A673 (cell line): ENCODE measurements at regions of chr1 and their contacts with region 1.

Region 1: GRCh38 chr1:234302354-234302962 is 70.8 kb upstream of the COA6 start:
- DNase-seq: peak; percentile 29
- H3K4me3 ChIP-seq: no peak overlapping the region
- H3K27ac ChIP-seq: peak overlapping the region; percentile 96
- H3K4me1 ChIP-seq: peaks cover 18% of the 10 kb centered on the region
- H3K27me3 ChIP-seq: no peaks in the 10 kb centered on the region
- CTCF ChIP-seq: no peak

Region 2: GRCh38 chr1:232435729-232436128 is 1866.7 kb before region 1 on chr1:
- CTCF ChIA-PET with region 1: no interaction called
- POLR2A ChIA-PET with region 1: interaction called, 10 read pairs
- intact Hi-C with region 1: no loop called
- DNase-seq: peak; percentile 62
- H3K4me3 ChIP-seq: no peak overlapping the region
- H3K27ac ChIP-seq: no peak overlapping the region
- H3K4me1 ChIP-seq: peaks cover 38% of the 10 kb centered on the region
- H3K27me3 ChIP-seq: no peaks in the 10 kb centered on the region
- CTCF ChIP-seq: no peak

Region 3: DNA sequence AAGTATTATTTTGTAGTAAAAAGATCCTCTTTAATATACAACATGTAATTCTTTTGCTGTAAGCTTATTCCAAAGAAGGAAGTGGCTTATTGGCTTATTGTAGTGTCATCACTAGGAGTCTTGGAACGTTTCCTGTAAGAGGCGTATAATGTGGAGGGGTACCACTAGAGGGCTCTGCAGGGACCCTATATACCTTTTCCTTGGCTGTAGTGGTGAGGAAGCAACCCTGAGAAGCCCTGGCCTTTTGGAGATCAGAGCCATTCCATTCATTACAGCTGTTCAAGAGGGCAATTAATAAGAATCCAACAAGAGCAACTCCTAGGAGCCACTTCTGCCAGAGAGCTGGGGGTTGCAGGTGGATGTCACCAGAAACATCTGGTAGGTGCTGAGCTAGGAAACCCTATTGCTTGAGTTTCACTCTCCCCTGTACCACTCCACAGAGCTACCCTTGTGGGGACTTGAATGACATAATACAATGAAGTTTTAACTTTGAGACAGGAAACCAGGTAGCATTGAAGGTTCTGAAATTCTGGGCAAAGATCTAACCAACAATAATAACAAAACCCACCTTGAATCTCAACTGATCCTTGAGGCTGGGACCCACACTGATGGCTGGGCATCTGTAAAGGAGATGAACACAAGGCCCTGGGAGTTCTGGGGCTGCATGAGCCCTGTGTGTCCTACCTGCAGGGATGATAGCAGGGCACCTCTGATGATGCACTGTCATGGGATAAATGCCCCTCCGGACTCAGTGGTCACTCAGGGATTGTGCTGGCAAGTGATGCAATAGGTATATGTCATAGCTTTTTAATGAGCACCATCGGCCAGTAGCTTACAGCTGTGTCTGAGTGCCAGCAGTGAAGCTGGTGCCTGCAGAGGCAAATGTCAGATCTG is 89.4 kb before region 1 on chr1:
- CTCF ChIA-PET with region 1: no interaction called
- POLR2A ChIA-PET with region 1: no interaction called
- intact Hi-C with region 1: loop called (anchors 2 kb)
- DNase-seq: peak; percentile 93
- H3K4me3 ChIP-seq: peak overlapping the region; percentile 83
- H3K27ac ChIP-seq: peak overlapping the region; percentile 66
- H3K4me1 ChIP-seq: peaks cover 40% of the 10 kb centered on the region
- H3K27me3 ChIP-seq: no peaks in the 10 kb centered on the region
- CTCF ChIP-seq: peak; percentile 95

Region 4: DNA sequence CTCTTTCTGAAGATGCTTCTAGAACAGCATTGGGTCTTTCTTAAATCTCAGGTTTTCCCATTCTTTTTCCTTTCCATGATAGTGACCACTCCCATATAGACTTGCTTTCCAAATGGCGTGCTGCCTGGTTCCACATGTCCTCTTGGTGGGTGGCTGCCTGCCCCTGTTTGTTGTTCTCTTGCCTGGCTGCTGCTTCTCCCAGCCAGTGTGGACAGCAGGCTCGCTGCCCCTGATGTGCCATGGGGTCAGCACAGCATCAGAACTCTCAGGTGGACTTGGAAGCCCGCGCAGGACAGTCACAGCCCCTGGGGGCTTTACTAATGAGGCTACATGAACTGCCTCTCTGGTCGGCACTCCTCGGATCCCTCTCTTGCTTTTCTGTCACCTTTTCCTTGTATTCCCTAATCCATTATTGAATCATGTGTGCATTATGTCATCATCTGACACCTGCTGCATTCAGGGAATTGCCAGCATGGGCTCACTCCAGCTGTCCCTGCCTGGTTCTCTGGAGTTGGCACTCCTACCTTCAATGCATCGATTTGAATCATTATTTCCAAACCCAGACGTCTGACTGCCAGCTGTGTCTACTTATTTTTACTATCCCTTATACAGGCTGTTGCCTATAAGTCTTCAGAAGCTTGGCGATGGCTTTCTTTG is 29.7 kb before region 1 on chr1:
- CTCF ChIA-PET with region 1: no interaction called
- POLR2A ChIA-PET with region 1: no interaction called
- intact Hi-C with region 1: loop called (anchors 1 kb)
- DNase-seq: no peak
- H3K4me3 ChIP-seq: no peak overlapping the region
- H3K27ac ChIP-seq: no peak overlapping the region
- H3K4me1 ChIP-seq: peaks cover 19% of the 10 kb centered on the region
- H3K27me3 ChIP-seq: no peaks in the 10 kb centered on the region
- CTCF ChIP-seq: no peak